Uterus (tissue), 4 donors: ENCODE measurements at regions of chr2 and their contacts with region 1.

Region 1: GRCh38 chr2:26942543-26943295 is 27.7 kb upstream of the MAPRE3 start:
- DNase-seq: peak; percentile 45 to 57
- H3K4me3 ChIP-seq: no peak overlapping the region
- H3K27ac ChIP-seq: no peak overlapping the region
- H3K4me1 ChIP-seq: no peaks in the 10 kb centered on the region
- H3K27me3 ChIP-seq: no peaks in the 10 kb centered on the region
- CTCF ChIP-seq: peak; percentile 51 to 63 (median 53)
- POLR2A ChIP-seq: no peak

Region 2: GRCh38 chr2:26846328-26847306 is 96.1 kb before region 1 on chr2:
- intact Hi-C with region 1: loop called (anchors 5 kb)
- DNase-seq: peak; percentile 36 to 62
- H3K4me3 ChIP-seq: no peak overlapping the region
- H3K27ac ChIP-seq: no peak overlapping the region
- H3K4me1 ChIP-seq: peaks cover 0 to 23% of the 10 kb centered on the region in 2 donors
- H3K27me3 ChIP-seq: peaks cover 33 to 41% of the 10 kb centered on the region in 2 donors
- CTCF ChIP-seq: peak; percentile 63 to 74 (median 72)
- POLR2A ChIP-seq: no peak